ENCODE measurements at regions of chr3 and their contacts with region 1.

Region 1: DNA sequence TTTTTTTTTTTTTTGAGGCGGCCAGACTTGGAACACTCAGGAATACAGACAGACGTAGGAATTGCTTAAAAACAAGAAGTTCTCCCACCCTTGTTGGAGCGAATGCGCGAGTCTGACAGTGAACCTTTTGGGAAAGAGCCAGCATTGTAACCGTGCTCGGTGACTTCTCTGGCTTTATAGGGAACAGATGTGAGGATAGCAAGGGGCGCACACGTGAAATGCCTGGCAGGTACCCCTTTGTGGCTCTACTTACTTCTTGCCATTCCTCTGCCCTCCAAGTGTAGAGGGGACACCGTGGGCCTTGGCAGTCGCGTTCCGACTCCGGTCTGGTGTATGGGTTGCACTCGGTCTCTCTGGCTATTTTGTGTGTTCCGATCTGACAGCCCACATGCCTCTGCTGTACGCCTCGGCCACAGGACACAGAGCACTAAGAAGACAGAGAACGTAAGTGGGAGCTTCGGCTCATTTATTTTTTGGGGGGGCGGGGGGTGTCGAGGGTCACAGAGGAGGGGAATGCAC is 126.4 kb downstream of the ADAMTS9 start:
- DNase-seq: peak; percentile 32
- H3K4me3 ChIP-seq: no peak overlapping the region
- H3K27ac ChIP-seq: no peak overlapping the region
- H3K4me1 ChIP-seq: no peaks in the 10 kb centered on the region
- H3K27me3 ChIP-seq: no peaks in the 10 kb centered on the region
- CTCF ChIP-seq: no peak
- POLR2A ChIP-seq: no peak

Region 2: GRCh38 chr3:64440498-64440897 is 120.9 kb before region 1 on chr3:
- CTCF ChIA-PET with region 1: no interaction called
- POLR2A ChIA-PET with region 1: no interaction called
- dilution Hi-C with region 1: no loop called
- intact Hi-C with region 1: no loop called
- DNase-seq: peak; percentile 15
- H3K4me3 ChIP-seq: no peak overlapping the region
- H3K27ac ChIP-seq: no peak overlapping the region
- H3K4me1 ChIP-seq: no peaks in the 10 kb centered on the region
- H3K27me3 ChIP-seq: peaks cover 34 to 37% of the 10 kb centered on the region in 2 experiments
- CTCF ChIP-seq: no peak
- POLR2A ChIP-seq: no peak

Region 3: GRCh38 chr3:64575211-64575844 is 13.9 kb after region 1 on chr3:
- CTCF ChIA-PET with region 1: interaction called, 10 read pairs
- POLR2A ChIA-PET with region 1: no interaction called
- dilution Hi-C with region 1: no loop called
- intact Hi-C with region 1: no loop called
- DNase-seq: peak; percentile 35
- H3K4me3 ChIP-seq: no peak overlapping the region
- H3K27ac ChIP-seq: no peak overlapping the region
- H3K4me1 ChIP-seq: peaks cover 5% of the 10 kb centered on the region
- H3K27me3 ChIP-seq: no peaks in the 10 kb centered on the region
- CTCF ChIP-seq: peak; percentile 46 to 54
- POLR2A ChIP-seq: no peak

Region 4: GRCh38 chr3:65268426-65268825 is 707.0 kb after region 1 on chr3:
- CTCF ChIA-PET with region 1: no interaction called
- POLR2A ChIA-PET with region 1: no interaction called
- dilution Hi-C with region 1: no loop called
- intact Hi-C with region 1: no loop called
- DNase-seq: no peak
- H3K4me3 ChIP-seq: no peak overlapping the region
- H3K27ac ChIP-seq: no peak overlapping the region
- H3K4me1 ChIP-seq: no peaks in the 10 kb centered on the region
- H3K27me3 ChIP-seq: peaks cover 3 to 4% of the 10 kb centered on the region in 2 experiments
- CTCF ChIP-seq: no peak
- POLR2A ChIP-seq: no peak